ENCODE measurements at regions of chr15 and their contacts with region 1.

Region 1: DNA sequence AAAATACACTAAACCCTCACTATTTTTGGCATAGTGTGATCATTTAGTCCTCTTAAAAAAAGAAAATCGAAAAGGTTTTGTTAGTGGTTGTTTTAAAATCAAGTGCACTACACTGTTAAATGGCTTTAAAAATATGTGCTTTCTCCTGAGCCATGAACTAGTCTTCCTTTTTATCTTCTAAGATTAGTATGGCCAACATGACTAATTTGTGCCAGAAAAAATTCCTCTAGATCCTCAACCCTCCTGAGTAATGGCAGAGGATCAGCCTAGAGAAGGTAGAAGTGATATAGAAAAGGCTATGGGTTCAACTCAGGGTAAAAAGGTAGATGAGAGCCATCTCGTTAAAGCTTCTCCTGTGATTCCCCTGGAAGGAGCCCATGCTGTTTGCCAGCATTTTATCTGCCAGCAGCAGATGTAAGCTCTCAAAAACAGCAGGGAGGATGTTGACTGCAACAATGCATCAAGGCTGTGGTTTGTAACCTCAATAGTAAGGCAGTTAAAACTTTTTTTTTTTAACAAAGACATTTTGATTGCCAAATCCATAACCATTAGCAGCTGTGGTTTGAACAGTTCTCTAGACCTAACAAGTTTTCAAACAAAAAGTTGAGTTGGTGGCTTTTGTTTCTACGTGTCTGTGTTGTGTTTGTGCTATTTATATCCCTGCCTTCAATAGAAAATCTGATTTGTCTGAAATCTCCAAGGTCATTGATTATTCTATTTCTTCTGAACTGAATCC is 30.2 kb upstream of the ZNF609 start:
- DNase-seq: peak; percentile 20
- H3K4me3 ChIP-seq: no peak overlapping the region
- H3K27ac ChIP-seq: peak overlapping the region; percentile 33
- H3K4me1 ChIP-seq: no peaks in the 10 kb centered on the region
- H3K27me3 ChIP-seq: no peaks in the 10 kb centered on the region
- CTCF ChIP-seq: no peak

Region 2: DNA sequence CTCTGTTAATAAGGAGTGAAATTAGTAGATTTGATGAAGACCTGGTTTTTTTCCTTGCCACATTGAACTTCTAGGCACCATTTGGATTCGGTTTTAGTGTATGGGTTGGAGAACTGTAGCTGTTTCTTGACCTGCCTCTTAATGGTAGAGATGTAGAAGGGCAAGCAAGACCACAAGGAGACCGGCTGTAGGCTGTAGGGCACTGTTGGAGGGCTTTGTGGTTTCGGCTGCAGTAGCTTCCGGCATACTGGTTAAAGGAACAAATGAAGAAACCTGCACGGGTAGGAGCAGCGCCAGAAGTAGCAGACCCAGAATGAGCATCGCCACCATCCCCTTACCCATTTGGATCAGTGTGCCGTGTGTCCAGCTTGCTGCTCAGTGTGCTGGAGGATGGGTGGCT is 56.8 kb before region 1 on chr15:
- intact Hi-C with region 1: no loop called
- DNase-seq: no peak
- H3K4me3 ChIP-seq: no peak overlapping the region
- H3K27ac ChIP-seq: no peak overlapping the region
- H3K4me1 ChIP-seq: no peaks in the 10 kb centered on the region
- H3K27me3 ChIP-seq: no peaks in the 10 kb centered on the region
- CTCF ChIP-seq: no peak

Region 3: GRCh38 chr15:64387562-64388168 is 42.5 kb before region 1 on chr15 and contains the start of gene TRIP4:
- intact Hi-C with region 1: no loop called
- DNase-seq: peak; percentile 96
- H3K4me3 ChIP-seq: peak within 1 kb of the TSS; percentile 77
- H3K27ac ChIP-seq: peak within 1 kb of the TSS; percentile 82
- H3K4me1 ChIP-seq: peaks cover 7% of the 10 kb centered on the region
- H3K27me3 ChIP-seq: no peaks in the 10 kb centered on the region
- CTCF ChIP-seq: no peak
- total RNA-seq, gene TRIP4: 28.0 to 32.4 TPM

Region 4: DNA sequence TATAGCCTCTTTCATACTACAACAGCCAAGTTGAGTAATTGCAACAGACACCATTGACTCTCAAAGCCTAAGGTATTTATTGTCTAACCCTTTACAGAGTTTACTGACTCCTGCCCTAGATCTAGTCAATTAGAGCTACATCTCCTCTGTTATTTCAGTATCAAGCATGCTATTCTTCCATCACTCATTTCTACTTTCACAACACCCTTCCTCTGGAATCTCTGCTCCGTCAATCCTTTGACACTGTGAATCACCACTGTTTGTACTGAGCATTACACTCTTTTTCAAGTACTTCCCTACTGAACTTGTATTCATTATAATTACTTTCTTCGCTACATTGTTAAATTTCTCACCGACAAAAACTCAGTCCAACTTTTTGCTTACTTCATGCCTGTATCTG is 152.0 kb after region 1 on chr15:
- intact Hi-C with region 1: no loop called
- DNase-seq: no peak
- H3K4me3 ChIP-seq: no peak overlapping the region
- H3K27ac ChIP-seq: no peak overlapping the region
- H3K4me1 ChIP-seq: no peaks in the 10 kb centered on the region
- H3K27me3 ChIP-seq: no peaks in the 10 kb centered on the region
- CTCF ChIP-seq: no peak

Region 5: DNA sequence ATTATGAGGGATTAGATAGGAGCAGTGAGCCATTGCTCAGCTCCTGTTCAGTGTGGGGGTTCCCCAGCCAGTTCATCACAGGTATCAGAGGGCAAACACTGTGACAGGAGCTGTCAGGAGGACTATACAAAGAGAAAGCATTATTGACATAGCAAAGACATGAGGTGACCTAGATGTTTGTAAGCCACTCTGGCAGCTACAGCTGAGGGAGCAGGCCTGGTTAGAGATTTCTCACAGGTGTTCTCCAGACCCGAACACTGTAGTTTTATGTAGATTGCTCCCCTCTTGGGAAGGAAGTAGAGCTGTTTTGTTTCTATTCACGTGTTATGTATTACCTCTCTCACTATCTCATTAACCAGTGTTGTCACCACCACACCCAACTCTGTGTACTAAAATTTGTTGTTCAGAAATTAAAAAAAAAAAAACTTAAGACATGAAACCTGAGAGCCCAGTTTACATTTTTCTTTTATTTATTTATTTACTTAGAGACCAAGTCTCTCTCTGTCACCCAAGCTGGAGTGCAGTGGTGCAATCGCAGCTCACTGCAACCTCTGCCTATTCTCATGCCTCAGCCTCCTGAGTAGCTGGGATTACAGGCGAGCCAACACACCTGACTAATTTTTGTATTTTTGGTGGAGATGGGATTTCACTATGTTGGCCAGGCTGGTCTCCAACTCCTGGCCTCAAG is 221.5 kb after region 1 on chr15:
- intact Hi-C with region 1: loop called (anchors 10 kb)
- DNase-seq: no peak
- H3K4me3 ChIP-seq: no peak overlapping the region
- H3K27ac ChIP-seq: no peak overlapping the region
- H3K4me1 ChIP-seq: peaks cover 4% of the 10 kb centered on the region
- H3K27me3 ChIP-seq: no peaks in the 10 kb centered on the region
- CTCF ChIP-seq: no peak

Region 6: DNA sequence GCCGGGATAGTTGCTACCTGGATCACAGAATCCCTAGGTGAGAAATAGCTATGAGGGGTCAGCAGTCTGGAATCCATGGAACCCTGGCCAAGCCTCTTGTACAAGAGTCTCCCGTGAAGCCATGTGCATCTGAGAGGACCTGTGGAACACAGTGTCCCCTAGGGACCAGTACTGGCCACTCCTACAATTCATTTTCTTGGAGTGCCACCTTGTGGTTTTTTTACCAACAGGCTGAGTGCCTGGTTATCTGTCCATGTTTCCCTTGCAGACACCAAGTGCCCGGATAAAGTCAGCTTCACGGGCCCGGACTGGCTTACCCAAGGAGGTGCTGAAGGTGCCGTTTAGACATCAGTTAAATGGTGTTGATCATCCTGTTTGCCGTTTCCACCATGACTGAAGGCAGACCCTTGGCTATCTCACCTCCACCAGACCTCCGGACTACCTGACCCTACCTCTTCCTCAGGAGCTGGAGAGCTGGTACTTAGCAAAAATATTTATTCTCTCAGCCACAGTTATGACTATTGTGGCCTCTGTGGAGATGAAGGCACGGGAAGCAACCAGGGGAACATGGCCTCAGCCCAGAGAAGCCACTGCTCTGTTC is 251.4 kb after region 1 on chr15:
- intact Hi-C with region 1: loop called (anchors 10 kb)
- DNase-seq: peak; percentile 44
- H3K4me3 ChIP-seq: no peak overlapping the region
- H3K27ac ChIP-seq: no peak overlapping the region
- H3K4me1 ChIP-seq: no peaks in the 10 kb centered on the region
- H3K27me3 ChIP-seq: no peaks in the 10 kb centered on the region
- CTCF ChIP-seq: peak; percentile 64

Measured in colonic mucosa (tissue), 4 donors.